ENCODE measurements at regions of chr15 and their contacts with region 1.

Region 1: DNA sequence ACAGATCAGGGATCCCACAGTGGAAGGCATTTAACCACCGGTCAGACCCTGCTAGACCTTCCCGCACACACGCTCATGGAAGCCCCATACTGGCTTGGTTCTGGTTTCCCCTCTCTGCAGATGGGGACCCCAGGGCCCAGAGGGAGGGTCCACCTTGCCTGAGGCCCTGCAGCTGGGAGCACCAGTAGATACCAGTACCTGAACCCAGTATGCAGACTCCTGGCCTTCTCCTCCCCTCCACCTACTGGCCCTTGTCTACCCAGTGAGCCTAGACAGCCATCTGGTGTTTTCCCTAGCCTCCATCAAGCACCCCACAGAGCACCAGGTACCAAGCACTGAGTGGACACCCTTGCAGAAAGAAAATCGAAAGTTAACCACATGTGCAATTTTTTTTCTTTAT is 65.1 kb downstream of the MEGF11 start:
- DNase-seq: peak; percentile 69

Region 2: DNA sequence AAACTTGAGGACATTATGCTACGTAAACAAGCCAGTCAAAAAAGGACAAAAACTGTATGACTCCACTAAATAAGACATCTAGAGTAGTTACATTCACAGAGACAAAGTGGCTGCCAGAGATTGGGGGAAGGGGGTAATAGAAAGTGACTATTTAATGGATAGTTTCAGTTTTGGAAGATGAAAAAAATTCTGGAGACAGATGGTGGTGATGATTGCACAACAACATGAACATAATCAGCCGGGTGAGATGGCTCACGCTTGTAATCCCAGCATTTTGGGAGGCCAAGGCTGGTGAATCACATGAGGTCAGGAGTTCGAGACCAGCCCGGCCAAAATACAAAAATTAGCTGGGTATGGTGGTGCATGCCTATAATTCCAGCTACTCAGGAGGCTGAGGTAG is 711.6 kb before region 1 on chr15:
- intact Hi-C with region 1: no loop called
- DNase-seq: no peak

Region 3: GRCh38 chr15:65916664-65917406 is 271.6 kb before region 1 on chr15:
- intact Hi-C with region 1: loop called (anchors 10 kb)
- DNase-seq: no peak

Region 4: GRCh38 chr15:66359740-66360139 is 171.3 kb after region 1 on chr15:
- intact Hi-C with region 1: no loop called
- DNase-seq: no peak

Measured in cardiac septum (tissue), 1 donor.